Heart right ventricle (tissue), 16 donors: ENCODE measurements at regions of chr19 and their contacts with region 1.

Region 1: GRCh38 chr19:18596752-18597157 is 8.2 kb downstream of the REX1BD start:
- DNase-seq: peak in 1 of 2 donors; percentile 60
- ATAC-seq: peak in 3 of 8 donors; percentile 27 to 44 (median 43)
- H3K4me3 ChIP-seq: no peak overlapping the region
- H3K27ac ChIP-seq: no peak overlapping the region
- H3K4me1 ChIP-seq: peaks cover 10 to 27% (median 17%) of the 10 kb centered on the region in 9 donors
- H3K27me3 ChIP-seq: peaks cover 0 to 65% (median 56%) of the 10 kb centered on the region in 7 donors
- CTCF ChIP-seq: no peak

Region 2: DNA sequence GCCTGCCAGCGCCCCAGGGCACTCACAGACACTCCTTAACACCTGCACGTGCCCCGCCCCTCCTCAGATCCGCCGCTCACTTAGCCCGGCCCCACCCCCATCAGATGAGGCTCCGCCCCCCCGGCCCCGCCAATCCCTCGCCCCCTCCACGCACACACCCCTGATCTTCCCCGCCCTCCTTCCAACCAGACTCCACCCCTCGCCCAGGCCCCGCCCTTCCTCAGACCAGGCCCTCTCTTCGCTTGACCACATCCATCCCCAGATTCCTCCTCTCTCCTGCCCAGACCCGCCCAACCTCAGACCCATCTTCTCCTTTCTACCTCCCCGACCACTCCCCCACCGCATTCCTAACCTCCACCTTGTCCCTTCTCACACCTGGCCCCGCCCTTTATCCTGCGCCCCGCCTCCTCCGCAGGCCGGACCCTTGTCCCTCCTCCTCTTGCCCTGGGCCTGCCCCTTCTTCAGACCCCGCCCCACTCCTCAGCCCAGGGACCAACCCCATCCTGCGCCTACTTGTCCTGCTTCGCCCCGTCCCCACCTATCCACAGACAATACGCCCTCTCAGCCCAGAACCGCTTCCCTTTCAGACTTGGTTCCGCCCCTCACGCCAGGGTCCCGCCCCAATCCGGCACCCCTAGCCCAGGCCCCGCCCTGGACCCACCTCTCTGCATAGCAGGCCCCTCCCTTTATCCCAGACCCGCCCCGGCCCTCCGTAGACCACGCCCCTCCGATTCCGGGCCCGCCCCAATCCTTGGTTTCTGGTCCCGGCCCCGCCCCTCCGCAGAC is 39.6 kb after region 1 on chr19:
- intact Hi-C with region 1: loop called in 1 of 10 experiments (anchors 2 kb)
- DNase-seq: peak; percentile 98 to 99
- ATAC-seq: peak; percentile 97 to 99 (median 98)
- H3K4me3 ChIP-seq: peak overlapping the region; percentile 55 to 80 (median 68)
- H3K27ac ChIP-seq: peak overlapping the region in 9 of 10 donors; percentile 62 to 89 (median 82)
- H3K4me1 ChIP-seq: peaks cover 0 to 27% (median 10%) of the 10 kb centered on the region in 9 donors
- H3K27me3 ChIP-seq: no peaks in the 10 kb centered on the region
- CTCF ChIP-seq: no peak